IMR-90 (cell line): ENCODE measurements at regions of chr18 and their contacts with region 1.

Region 1: DNA sequence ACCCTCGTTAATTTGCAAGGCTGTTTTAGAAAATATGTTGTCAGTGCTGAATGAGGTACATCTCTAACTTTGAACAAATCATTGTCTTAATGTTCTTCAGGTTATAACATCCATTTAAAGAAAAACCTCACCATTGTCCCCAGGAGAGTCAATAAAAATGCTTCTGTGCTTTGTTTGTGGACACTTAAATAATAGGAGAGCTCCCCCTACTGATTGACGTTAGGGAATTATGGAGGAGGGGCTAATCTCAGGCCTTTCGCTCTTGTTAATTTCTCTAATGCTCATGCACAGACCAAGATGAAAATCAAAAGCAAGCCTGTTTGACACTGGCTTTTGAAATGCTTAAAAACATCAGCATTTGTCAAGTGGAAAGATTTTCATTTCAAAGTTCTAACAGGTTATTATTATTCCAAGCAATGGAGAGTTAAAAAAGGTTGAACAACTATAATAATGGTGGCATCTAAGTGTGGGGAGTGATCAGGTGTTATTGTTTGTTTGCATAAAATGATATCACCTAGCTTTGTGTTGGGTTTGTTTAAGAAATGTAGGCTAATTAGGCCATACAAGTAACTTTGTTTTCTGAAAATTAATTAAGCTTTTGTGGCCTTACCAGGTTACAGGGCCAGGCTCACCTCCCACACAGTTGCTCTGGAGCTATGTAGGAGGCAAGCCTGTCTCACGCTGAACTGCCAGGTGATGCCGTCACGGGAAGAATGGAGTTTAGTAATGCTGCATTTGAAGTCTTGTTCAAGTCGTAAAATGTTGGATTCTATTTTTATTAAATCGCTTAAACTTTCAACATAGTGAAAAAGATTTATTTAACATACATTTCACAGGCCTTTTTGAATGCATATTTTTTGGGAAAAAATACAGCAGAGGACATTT is 51.7 kb upstream of the SMIM21 start:
- DNase-seq: peak; percentile 59
- ATAC-seq: peak; percentile 49
- H3K4me3 ChIP-seq: no peak overlapping the region
- H3K27ac ChIP-seq: no peak overlapping the region
- H3K4me1 ChIP-seq: peaks cover 11% of the 10 kb centered on the region
- H3K27me3 ChIP-seq: no peaks in the 10 kb centered on the region
- CTCF ChIP-seq: peak; percentile 70
- POLR2A ChIP-seq: no peak
- RAD21 ChIP-seq: peak; percentile 72

Region 2: GRCh38 chr18:74645679-74646078 is 833.6 kb before region 1 on chr18:
- CTCF ChIA-PET with region 1: no interaction called
- POLR2A ChIA-PET with region 1: no interaction called
- dilution Hi-C with region 1: no loop called
- in situ Hi-C with region 1: loop called (anchors 5 kb)
- intact Hi-C with region 1: no loop called
- DNase-seq: peak; percentile 56
- ATAC-seq: peak; percentile 84
- H3K4me3 ChIP-seq: no peak overlapping the region
- H3K27ac ChIP-seq: peak overlapping the region; percentile 47; the same call in 1 of the 2 replicates
- H3K4me1 ChIP-seq: peaks cover 5% of the 10 kb centered on the region; the same call in 1 of the 2 replicates
- H3K27me3 ChIP-seq: no peaks in the 10 kb centered on the region
- CTCF ChIP-seq: no peak
- POLR2A ChIP-seq: no peak
- RAD21 ChIP-seq: no peak

Region 3: GRCh38 chr18:75638776-75639471 is 159.7 kb after region 1 on chr18:
- CTCF ChIA-PET with region 1: no interaction called
- POLR2A ChIA-PET with region 1: no interaction called
- dilution Hi-C with region 1: no loop called
- in situ Hi-C with region 1: no loop called
- intact Hi-C with region 1: loop called (anchors 2 kb)
- DNase-seq: peak; percentile 55
- ATAC-seq: peak; percentile 69
- H3K4me3 ChIP-seq: peak overlapping the region; percentile 32
- H3K27ac ChIP-seq: peak overlapping the region; percentile 61; the same call in 1 of the 2 replicates
- H3K4me1 ChIP-seq: no peaks in the 10 kb centered on the region
- H3K27me3 ChIP-seq: no peaks in the 10 kb centered on the region; the same call in 1 of the 2 replicates
- CTCF ChIP-seq: no peak
- POLR2A ChIP-seq: no peak
- RAD21 ChIP-seq: no peak